ENCODE measurements at regions of chr10 and their contacts with region 1.

Region 1: GRCh38 chr10:117741524-117741923 is 199.0 kb downstream of the EMX2 start:
- DNase-seq: no peak

Region 2: DNA sequence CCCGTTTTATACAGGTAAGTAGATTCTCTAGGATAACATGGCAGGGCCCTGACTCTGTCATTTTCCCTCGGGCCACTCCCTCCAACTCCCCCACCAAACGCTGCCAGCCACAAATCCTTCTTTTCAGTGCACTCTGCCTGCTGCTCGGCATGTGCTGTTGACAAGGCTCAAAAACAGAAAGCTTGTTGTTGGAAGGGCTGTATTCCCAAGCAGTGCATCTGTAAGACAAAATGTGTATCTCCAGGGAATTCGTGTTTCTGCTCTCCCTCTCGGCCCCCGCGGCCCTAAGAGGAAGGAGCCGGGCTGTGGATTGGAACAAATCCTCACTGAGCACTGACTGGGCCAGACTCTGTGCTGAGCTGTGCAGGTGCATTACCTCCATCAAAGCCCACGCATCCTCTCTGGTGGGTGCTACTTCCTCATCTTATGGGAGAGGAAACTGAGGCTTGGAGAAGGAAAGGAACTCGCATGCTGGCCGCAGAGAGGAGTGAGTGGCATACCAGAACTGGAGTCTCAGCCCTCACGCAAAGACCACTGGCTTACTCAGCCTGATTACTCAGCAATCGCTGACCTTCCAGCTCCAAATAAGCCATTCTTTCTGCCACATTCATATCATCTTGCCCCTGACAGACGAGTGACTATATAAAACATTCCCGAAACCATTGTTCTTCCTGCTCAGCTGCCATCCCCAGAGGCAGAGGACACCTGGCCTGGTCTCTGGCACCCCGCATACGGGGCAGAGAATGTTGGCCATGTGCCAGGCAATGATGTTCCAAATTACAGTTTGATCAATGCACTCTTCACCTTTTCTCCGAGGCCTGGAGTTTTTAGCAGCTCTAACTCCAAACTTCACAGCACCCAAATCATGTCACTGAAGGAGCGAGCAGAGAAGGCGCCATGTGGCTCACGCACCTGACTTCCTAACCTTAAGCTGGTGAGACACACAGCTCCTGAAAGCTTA is 925.6 kb before region 1 on chr10:
- intact Hi-C with region 1: no loop called
- DNase-seq: no peak

Region 3: DNA sequence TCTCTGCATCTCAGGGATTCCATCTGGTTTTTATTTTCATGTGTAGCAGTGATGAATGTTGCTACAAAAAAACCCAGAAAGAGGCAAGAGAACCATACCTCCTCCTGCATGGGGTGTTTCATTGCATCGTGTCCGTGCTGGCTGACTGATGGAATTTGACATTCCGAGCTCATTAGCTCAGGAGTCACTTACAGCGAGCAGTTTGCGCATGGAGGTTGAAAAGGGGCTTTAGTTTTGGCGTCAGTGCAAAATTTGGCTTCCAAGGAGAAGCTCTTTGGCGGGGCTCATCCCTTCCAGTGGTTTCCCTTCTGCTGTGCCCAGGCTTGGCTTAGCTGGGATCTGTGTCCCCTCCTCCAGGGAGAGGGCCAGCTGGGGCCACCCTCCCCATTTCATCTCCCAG is 173.2 kb before region 1 on chr10:
- intact Hi-C with region 1: loop called (anchors 10 kb)
- DNase-seq: no peak